Activated T-helper 1 cell treated with anti-CD3 and anti-CD28 coated beads, Interleukin-12 subunit alpha, Interleukin-12 subunit beta, Interleukin-2, Interleukin-4 antibody, amounts not matched to agents 30 ng/mL and 10 ng/mL and 1 ng/mL, durations not matched to agents 14 hours and 24 hours and 36 hours (primary cell): ENCODE measurements at regions of chr13 and their contacts with region 1.

Region 1: GRCh38 chr13:51803422-51804294 is at the start of gene DHRS12:
- DNase-seq: peak; percentile 79
- H3K4me3 Mint-ChIP-seq: peak within 1 kb of the TSS; percentile 90
- H3K27ac Mint-ChIP-seq: peak within 1 kb of the TSS; percentile 99
- H3K4me1 Mint-ChIP-seq: peaks cover 49% of the 10 kb centered on the region
- H3K27me3 Mint-ChIP-seq: no peaks in the 10 kb centered on the region
- total RNA-seq, gene DHRS12: 3.3 and 3.5 TPM in 2 replicates

Region 2: DNA sequence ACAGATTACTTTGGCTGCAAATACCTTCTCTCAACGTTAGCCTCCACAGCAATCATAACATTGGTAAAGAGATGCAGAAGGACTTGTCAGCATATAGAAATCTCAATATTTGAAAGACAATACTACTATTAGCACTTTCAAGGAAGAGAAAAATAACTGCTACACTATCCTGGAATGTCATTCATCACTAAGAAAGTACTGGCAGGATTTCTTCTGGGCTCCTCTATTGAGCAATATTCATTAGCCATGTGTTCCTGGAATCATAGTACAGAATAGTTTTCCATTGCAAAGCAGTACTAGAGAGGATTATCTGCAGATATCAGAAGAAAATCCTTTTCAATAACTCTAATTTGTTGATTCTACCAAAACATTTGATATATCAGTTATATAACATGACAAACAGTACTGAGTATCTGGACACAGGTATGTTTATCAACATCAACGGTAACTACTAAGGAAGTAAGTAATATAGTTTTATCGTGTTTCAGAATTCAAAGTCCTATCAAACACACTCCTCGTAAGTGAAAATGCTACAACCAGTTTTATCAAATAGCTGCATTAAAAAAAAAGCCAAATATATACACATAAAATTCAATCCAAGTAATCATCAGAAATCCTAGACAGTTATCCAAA is 378.1 kb before region 1 on chr13:
- intact Hi-C with region 1: loop called (anchors 2 kb)
- DNase-seq: no peak
- H3K4me3 Mint-ChIP-seq: no peak overlapping the region
- H3K27ac Mint-ChIP-seq: no peak overlapping the region
- H3K4me1 Mint-ChIP-seq: peaks cover 64% of the 10 kb centered on the region
- H3K27me3 Mint-ChIP-seq: no peaks in the 10 kb centered on the region

Region 3: GRCh38 chr13:51583875-51584730 is 219.6 kb before region 1 on chr13 and contains the start of gene WDFY2:
- intact Hi-C with region 1: loop called (anchors 1 kb)
- DNase-seq: peak; percentile 99
- H3K4me3 Mint-ChIP-seq: peak within 1 kb of the TSS; percentile 94
- H3K27ac Mint-ChIP-seq: peak within 1 kb of the TSS; percentile 96
- H3K4me1 Mint-ChIP-seq: peaks cover 42% of the 10 kb centered on the region
- H3K27me3 Mint-ChIP-seq: no peaks in the 10 kb centered on the region
- total RNA-seq, gene WDFY2: 7.5 and 11.4 TPM in 2 replicates

Region 4: DNA sequence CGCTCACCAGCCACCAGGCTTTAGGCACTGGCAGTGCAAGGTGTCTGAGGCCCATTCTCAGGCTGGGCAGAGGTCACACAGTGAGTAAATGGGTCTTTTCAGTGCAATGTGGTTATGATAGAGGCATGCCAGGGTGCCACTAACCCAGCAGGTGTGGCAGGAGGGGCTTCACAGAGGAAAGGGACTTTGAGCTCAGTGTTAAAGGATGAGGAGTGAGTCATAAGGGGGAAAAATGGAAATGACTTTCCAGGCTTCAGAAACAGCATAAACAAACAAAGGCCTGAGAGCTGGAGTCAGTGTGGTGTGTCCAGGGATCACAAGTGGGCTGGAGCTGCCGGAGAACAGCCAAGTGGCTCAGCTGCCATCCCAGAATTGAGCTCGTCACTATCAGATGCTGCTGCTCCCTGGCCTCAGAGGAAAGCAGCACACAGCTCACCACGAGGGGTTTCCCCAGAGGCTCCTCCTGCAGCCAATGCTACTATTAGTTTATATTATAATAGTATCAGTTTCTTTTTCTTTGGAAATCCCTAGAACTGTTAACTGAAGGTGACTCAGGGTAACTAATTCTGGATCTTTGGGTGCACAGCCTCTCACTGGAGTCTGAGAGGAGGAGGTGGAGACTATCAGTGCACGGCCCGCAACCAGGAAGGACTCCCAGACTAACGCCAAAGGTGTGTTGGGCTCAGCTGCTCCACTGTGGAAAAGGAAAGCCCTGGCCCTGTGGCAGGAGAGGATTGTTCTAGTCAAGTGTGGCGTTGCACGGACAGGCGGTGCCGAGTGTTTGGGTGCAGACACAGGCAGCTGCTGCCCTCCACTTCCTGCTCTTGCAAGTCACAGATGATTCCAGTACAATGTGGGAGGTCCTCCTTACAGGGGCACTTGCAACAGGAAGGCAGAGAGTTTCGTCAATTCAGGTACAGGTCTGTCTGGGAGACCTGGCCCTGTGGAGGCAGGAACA is 39.2 kb before region 1 on chr13:
- intact Hi-C with region 1: loop called (anchors 1 kb)
- DNase-seq: peak; percentile 43
- H3K4me3 Mint-ChIP-seq: peak overlapping the region; percentile 79
- H3K27ac Mint-ChIP-seq: peak overlapping the region; percentile 96
- H3K4me1 Mint-ChIP-seq: peaks cover 41% of the 10 kb centered on the region
- H3K27me3 Mint-ChIP-seq: no peaks in the 10 kb centered on the region

Region 5: DNA sequence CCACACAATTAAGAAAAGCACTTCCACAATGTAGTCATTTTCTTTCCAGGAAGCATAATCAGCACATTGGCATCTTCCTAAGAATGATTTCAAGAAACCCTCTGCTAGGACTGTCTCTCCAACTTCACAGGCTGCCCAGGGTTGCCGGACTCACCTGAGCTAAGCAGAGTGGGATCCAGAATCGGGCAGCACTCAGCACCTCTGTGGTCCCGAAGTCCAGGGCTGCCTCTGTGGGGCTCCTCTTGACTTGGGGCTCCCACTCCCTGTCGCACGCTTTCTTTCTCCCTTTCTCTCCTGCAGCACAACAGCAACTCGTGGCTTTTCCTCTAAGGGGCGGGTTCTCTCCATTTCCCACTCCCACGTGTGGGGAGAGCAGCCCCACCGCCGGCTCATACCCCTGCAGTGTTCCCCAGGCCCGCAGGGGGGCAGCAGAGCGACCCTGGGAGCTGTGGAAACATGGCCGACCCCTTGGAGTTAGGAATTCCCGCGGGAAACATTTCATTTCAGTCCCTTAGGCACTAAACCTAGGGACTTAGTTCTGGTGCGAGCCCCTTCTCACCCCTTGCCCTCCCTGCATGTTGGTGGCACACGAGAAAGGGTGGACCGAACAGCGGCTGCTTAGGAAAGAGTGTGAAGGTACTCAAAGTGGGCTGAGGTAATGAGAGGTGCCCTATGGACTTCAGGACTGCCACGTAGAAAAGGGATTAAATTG is 41.4 kb after region 1 on chr13 and contains the start of gene TMEM272:
- intact Hi-C with region 1: loop called (anchors 5 kb)
- DNase-seq: peak; percentile 28
- H3K4me3 Mint-ChIP-seq: peak within 1 kb of the TSS; percentile 45
- H3K27ac Mint-ChIP-seq: peak within 1 kb of the TSS; percentile 70
- H3K4me1 Mint-ChIP-seq: peaks cover 12% of the 10 kb centered on the region
- H3K27me3 Mint-ChIP-seq: peaks cover 12% of the 10 kb centered on the region
- total RNA-seq, gene TMEM272: 0.26 and 0.88 TPM in 2 replicates

Region 6: GRCh38 chr13:52450012-52450792 is 646.5 kb after region 1 on chr13 and contains the start of gene VPS36:
- intact Hi-C with region 1: loop called (anchors 5 kb)
- DNase-seq: peak; percentile 93
- H3K4me3 Mint-ChIP-seq: peak within 1 kb of the TSS; percentile 96
- H3K27ac Mint-ChIP-seq: peak within 1 kb of the TSS; percentile 93
- H3K4me1 Mint-ChIP-seq: peaks cover 57% of the 10 kb centered on the region
- H3K27me3 Mint-ChIP-seq: peaks cover 2% of the 10 kb centered on the region
- total RNA-seq, gene VPS36: 47.8 and 49.2 TPM in 2 replicates